ENCODE measurements at regions of chr17 and their contacts with region 1.

Region 1: GRCh38 chr17:55845385-55845784 is 94.5 kb downstream of the PCTP start:
- DNase-seq: peak in 8 of 10 donors; percentile 5 to 68 (median 43)
- H3K4me3 ChIP-seq: peak overlapping the region in 52 of 59 donors; percentile 7 to 59 (median 42)
- H3K27ac ChIP-seq: no peak overlapping the region
- H3K27me3 ChIP-seq: peaks cover 0 to 8% (median 0%) of the 10 kb centered on the region in 45 donors
- CTCF ChIP-seq: peak in 55 of 56 donors; percentile 22 to 75 (median 54)

Region 2: DNA sequence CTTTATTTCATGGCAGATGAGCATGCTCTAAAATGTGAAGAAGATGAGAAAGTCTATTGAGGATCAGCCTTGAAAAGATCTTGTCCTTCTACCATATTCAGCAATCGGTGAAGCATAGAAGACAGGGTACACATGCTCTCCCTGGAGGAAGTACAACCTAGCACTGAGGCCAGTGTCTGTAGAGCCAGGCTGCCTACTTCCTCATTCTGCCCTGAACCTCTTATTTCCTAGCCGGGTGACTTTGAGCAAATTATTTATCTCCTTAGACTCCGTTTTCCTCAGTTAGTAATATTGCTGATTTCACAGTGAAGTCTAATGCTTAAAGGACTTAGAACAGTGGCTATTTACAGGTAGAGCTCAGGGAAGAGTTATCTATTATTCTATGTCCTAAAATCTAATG is 181.1 kb before region 1 on chr17:
- intact Hi-C with region 1: no loop called
- DNase-seq: no peak
- H3K4me3 ChIP-seq: no peak overlapping the region
- H3K27ac ChIP-seq: no peak overlapping the region
- H3K27me3 ChIP-seq: peaks cover 0 to 8% (median 0%) of the 10 kb centered on the region in 45 donors
- CTCF ChIP-seq: no peak

Region 3: DNA sequence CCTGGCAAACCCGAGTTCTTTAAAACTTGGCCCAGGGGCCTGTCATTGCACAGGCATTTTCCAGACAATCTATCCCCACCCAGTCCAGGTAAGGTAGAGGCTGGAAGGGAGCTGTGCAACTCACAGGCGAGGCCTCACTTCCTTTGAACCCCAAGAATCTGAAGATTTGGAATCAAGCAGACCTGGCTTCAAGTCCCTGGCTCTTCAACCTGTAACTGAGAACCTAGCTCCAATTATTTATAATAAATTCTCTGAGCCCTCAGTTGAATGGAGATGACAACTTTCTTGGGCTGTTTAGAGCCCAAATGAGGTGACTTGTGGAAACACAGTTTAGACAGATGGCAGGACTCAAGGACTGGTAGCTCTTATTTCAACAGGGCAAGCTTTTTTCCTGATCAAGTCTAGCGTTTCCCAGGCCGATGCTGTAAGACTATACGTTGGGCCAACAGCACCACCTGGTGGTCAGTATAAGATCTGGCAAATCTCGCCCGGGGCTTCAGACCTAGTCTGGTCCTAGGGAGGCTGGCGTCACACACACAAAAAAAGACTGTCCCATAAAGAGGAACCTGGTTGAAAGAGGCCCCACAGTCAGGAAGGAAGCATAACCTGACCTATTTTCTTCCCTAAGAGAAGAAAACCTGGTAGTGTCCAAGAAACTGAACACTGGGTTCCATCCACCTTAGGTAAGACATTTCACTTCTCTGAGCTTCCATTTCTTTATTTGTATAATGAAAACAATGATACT is 870.4 kb after region 1 on chr17:
- intact Hi-C with region 1: loop called in 1 of 2 experiments (anchors 10 kb)
- DNase-seq: peak; percentile 64 to 87 (median 79)
- H3K4me3 ChIP-seq: no peak overlapping the region
- H3K27ac ChIP-seq: no peak overlapping the region
- H3K27me3 ChIP-seq: peaks cover 0 to 12% (median 0%) of the 10 kb centered on the region in 45 donors
- CTCF ChIP-seq: peak; percentile 49 to 96 (median 88)

Measured in dorsolateral prefrontal cortex (tissue), 120 donors.